Activated naive CD4-positive, alpha-beta T cell treated with anti-CD3 and anti-CD28 coated beads, Interleukin-2, amount 10 ng/mL, durations not matched to agents 7 days and 5 days (primary cell): ENCODE measurements at regions of chr14 and their contacts with region 1.

Region 1: DNA sequence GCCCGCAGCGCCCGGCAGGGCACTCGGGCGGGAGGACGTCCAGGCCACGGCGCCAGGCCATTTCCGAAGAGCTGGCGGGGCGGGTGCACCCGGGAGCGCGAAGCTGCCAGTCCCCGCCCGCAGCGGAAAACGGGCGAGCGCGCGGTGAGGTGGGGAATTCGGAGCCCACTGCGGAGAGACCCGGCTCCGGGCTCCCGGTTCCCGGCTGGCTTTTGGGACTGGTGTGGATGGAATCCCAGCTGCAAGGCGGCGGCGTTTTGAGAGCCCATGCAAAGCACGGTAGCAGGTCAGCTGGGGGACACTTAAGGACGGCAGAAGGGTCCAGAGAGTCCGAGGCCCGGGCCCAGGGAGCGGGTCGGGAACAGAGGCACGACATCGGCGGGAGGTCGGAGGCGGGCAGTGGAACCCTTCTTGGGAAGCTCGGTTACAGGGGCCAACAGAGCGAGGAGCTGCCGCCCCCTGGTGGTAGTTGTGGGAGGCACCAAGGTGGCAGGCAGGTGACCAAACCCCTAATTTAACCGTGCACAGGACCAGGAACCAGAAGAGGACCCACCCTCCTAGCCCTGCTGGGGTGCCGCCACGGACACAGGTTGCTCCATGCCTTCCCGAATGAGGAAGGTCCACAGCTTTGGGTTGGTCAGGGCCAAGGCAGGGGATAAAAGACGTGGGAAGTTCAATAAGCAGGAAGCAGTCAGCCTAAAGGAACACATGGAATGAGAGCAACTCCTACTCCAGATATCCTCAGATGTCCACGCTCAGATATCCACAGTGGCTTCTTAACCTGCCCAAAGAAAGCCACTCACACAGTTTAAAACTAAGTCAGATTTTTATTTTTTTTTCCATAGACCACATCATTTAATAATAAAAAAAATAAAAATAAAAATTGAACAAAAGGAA is 685 bp upstream of the CDH24 start:
- DNase-seq: peak; percentile 92
- H3K4me3 Mint-ChIP-seq: peak overlapping the region; percentile 83
- H3K27ac Mint-ChIP-seq: peak overlapping the region; percentile 71
- H3K4me1 Mint-ChIP-seq: peaks cover 21% of the 10 kb centered on the region
- H3K27me3 Mint-ChIP-seq: peaks cover 25% of the 10 kb centered on the region

Region 2: GRCh38 chr14:23000860-23001259 is 57.1 kb before region 1 on chr14:
- CTCF ChIA-PET with region 1: interaction called, 633 read pairs
- DNase-seq: no peak
- H3K4me3 Mint-ChIP-seq: no peak overlapping the region
- H3K27ac Mint-ChIP-seq: no peak overlapping the region
- H3K4me1 Mint-ChIP-seq: peaks cover 6% of the 10 kb centered on the region
- H3K27me3 Mint-ChIP-seq: no peaks in the 10 kb centered on the region

Region 3: DNA sequence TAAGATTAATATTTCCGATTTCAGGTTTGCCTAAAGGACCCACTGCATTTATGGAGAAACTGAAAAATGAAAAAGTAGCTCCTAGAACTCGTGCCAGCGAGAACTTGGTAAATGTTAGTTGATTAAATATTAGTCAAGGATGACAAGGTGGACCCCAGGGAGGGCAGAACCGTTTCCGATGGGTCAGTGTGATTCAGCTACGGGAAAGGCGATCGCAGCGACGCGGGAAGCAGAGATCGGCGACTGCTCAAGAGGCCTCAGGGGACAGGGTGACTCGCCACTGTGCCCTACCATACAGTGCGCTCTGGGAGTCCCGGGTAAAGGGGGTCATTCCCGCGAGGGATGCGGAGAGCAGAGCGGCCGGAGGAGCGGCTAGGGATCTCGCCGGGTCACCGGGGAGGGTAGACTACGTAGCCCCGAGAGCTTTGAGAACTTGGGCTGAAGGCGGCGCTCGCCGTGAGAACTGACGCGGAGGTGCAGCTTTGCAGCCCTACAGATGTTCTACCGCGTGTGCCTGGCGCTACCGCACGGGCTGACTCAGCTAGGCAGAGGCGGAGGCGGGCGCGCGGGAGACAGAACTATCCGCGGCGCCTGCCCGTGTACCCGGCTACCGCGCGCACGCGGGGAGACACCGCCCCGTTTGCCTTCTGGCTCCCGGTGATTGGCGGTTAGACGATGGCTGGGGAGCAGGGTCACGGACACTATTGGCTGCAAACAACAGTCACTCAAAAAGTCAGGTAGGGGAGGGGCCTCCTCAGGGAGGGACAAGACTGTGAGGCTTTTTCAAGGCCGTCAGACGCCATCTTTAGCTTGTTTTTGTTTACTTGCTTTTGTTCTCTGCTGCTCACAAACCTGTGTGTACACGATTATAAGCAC is 51.2 kb before region 1 on chr14:
- CTCF ChIA-PET with region 1: interaction called, 21 read pairs
- DNase-seq: peak; percentile 98
- H3K4me3 Mint-ChIP-seq: peak overlapping the region; percentile 96
- H3K27ac Mint-ChIP-seq: peak overlapping the region; percentile 98
- H3K4me1 Mint-ChIP-seq: peaks cover 53% of the 10 kb centered on the region
- H3K27me3 Mint-ChIP-seq: no peaks in the 10 kb centered on the region

Region 4: DNA sequence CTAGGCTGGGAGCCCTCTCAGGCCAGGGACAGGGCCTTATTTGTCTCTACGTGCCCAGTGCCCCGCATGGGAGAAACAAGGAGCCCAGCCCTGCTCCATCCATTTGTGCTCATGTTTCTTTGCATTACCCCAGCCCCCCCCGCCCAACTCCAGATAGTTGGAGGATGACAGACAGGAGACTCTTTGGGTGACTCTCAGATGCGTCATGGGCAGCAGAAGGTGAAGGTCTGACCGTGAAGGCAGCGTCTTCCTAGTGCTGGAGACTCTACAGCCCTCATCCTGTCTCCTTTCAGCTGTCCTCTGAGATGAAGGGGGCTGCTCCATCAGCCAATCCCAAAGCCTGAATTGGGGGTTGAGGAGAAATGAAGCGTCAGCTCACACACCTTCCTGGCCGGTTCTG is 16.3 kb before region 1 on chr14:
- CTCF ChIA-PET with region 1: interaction called, 14 read pairs
- DNase-seq: no peak
- H3K4me3 Mint-ChIP-seq: no peak overlapping the region
- H3K27ac Mint-ChIP-seq: no peak overlapping the region
- H3K4me1 Mint-ChIP-seq: peaks cover 2% of the 10 kb centered on the region
- H3K27me3 Mint-ChIP-seq: peaks cover 38% of the 10 kb centered on the region

Region 5: DNA sequence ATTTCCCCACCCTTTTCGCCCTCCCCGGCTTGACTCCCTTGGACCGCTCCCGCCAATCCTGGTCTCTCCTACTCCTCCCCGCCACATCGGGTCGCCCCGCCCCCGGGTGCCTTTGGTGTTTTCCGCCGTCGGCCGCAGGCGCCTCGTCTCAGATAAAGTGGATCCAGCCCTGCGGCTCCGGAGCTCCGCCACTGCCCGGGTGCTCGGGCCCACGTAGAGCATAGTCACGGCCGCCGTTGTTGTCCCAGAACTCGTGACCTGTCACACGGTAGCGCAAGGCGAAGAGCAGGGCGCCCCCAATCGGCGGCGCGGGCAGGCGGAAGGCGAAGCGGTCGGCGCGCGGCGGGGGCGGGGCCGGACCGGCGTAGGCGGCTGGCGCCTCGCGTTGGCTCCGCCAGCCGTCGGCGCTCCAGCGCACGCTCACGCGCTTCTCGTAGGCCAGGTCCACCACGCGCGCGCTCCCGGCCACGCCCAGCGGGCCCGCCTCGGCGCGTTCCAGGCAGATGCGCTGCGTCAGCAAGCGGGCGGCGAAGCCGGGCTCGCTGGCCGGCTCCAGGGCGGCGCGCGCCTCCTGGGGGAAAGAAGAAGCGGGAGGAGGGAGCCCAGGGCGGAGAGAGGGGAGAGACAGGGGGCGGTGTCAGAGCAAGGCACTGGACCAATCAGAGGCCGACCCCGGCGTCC is 243.4 kb after region 1 on chr14:
- CTCF ChIA-PET with region 1: no interaction called
- DNase-seq: peak; percentile 97
- H3K4me3 Mint-ChIP-seq: peak overlapping the region; percentile 97
- H3K27ac Mint-ChIP-seq: peak overlapping the region; percentile 100
- H3K4me1 Mint-ChIP-seq: peaks cover 36% of the 10 kb centered on the region
- H3K27me3 Mint-ChIP-seq: peaks cover 26% of the 10 kb centered on the region